Mammary epithelial cell (primary cell): ENCODE measurements at regions of chr4 and their contacts with region 1.

Region 1: GRCh38 chr4:113547487-113548042 is 214.0 kb downstream of the CAMK2D start:
- DNase-seq: peak; percentile 98
- H3K4me3 ChIP-seq: no peak overlapping the region
- H3K27ac ChIP-seq: peak overlapping the region; percentile 34
- H3K4me1 ChIP-seq: no peaks in the 10 kb centered on the region
- H3K27me3 ChIP-seq: no peaks in the 10 kb centered on the region
- CTCF ChIP-seq: peak; percentile 98 to 99

Region 2: DNA sequence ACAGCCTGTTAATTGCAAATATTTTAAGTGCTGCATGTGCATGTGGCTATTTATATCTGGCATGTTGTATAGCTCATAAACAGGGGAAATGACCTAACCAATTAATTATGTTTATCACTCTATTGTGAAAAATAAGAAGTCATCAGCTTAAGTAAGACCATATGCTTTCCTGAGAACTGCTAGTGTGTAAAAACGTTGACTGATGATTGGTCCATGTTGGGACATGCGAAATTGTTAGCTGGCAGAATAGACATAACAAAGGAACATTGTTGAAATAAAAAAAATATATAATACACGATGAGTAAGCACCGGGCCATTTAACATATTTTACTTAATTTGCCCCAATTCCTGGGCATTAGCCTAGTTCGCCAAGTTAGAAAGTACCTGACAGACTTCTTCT is 290.6 kb before region 1 on chr4:
- CTCF ChIA-PET with region 1: no interaction called
- dilution Hi-C with region 1: no loop called
- in situ Hi-C with region 1: no loop called
- intact Hi-C with region 1: no loop called
- DNase-seq: peak; percentile 70
- H3K4me3 ChIP-seq: no peak overlapping the region
- H3K27ac ChIP-seq: no peak overlapping the region
- H3K4me1 ChIP-seq: peaks cover 5% of the 10 kb centered on the region
- H3K27me3 ChIP-seq: no peaks in the 10 kb centered on the region
- CTCF ChIP-seq: no peak

Region 3: GRCh38 chr4:113278324-113278934 is 269.1 kb before region 1 on chr4:
- CTCF ChIA-PET with region 1: no interaction called
- dilution Hi-C with region 1: no loop called
- in situ Hi-C with region 1: loop called in 1 of 2 experiments (anchors 25 kb)
- intact Hi-C with region 1: no loop called
- DNase-seq: peak; percentile 55
- H3K4me3 ChIP-seq: no peak overlapping the region
- H3K27ac ChIP-seq: no peak overlapping the region
- H3K4me1 ChIP-seq: no peaks in the 10 kb centered on the region
- H3K27me3 ChIP-seq: no peaks in the 10 kb centered on the region
- CTCF ChIP-seq: peak; percentile 85 to 88

Region 4: DNA sequence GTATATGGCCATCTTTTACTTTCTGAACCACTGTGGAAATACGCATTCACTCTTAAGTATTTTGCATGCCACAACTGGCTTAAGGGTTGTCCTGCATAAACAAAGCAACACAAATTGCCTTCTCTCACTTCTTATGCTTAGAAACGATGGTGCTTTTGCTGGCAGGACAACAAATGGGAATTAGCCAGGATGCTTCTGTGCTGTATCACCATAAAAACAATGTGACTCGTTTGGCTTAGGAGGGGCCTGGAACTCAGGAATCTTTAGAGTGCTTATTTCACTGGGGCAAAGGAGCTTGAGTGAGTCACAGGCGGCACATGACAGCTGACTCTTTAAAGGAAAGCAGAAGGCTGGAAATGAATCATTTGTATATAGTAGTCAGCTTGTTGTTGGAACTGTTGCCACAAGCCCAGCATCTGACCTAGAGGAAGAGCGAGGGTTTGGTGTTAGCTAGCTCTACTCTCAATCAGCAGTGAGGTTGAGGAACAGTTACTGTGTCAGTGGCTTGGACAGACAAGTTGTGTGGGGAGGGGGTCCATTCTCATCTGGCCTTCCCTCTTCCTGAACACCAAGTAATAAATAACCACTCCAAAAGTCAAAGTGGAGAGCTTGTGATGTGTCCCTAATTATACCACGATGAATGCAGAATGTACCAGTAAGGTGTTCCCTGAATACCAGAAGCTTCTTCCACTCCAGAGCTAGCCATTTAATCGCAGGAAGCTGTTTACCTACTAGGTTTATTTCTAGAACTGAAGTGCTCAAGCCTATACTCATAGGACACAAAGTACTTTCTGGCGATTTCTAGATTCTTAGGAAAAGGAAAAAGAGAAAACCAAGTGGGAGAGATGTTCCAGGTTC is 79.2 kb before region 1 on chr4:
- CTCF ChIA-PET with region 1: no interaction called
- dilution Hi-C with region 1: no loop called
- in situ Hi-C with region 1: no loop called
- intact Hi-C with region 1: loop called (anchors 2 kb)
- DNase-seq: peak; percentile 100
- H3K4me3 ChIP-seq: peak overlapping the region in 2 of 3 experiments; percentile 9 to 26
- H3K27ac ChIP-seq: peak overlapping the region; percentile 99
- H3K4me1 ChIP-seq: peaks cover 26% of the 10 kb centered on the region
- H3K27me3 ChIP-seq: no peaks in the 10 kb centered on the region
- CTCF ChIP-seq: no peak

Region 5: GRCh38 chr4:113684534-113685091 is 137.0 kb after region 1 on chr4:
- CTCF ChIA-PET with region 1: no interaction called
- dilution Hi-C with region 1: no loop called
- in situ Hi-C with region 1: no loop called
- intact Hi-C with region 1: loop called (anchors 1 kb)
- DNase-seq: no peak
- H3K4me3 ChIP-seq: no peak overlapping the region
- H3K27ac ChIP-seq: no peak overlapping the region
- H3K4me1 ChIP-seq: peaks cover 4% of the 10 kb centered on the region
- H3K27me3 ChIP-seq: no peaks in the 10 kb centered on the region
- CTCF ChIP-seq: peak; percentile 4 to 26

Region 6: DNA sequence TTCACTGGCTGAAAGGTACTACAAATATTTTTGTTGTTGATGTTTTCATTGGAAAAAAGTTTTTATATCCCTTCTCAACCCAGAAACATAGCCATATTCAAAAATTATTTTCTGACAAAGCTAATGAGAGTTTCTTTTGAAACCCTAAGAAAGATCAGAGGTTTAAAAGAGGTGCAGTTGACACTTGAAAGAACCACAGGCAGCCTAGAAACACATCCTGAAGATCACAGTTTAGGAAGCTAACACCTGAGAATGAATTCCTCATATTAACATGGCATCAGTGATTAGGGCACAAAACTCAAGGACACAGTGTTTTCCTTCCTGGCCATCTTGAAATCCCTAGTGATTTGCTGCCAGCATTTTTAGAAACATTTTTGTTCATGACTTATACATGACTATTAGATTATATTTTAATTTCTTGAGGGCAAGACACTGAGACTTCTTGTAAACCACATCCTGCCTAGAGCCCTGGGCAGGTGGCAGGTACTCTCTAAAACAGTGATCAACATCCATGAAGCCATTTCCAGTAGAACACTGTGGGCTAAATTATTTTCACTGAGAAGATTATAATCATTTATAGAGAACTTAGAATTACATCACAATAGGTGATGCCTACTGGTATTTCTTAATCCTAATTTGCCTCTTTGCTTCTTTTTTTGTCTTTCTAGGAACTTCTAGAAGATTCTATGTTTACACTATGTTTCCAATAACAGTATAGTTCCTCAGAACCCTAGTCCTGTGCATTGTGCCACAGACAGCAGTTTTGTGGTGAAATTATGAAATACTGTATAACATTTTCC is 351.9 kb after region 1 on chr4:
- CTCF ChIA-PET with region 1: no interaction called
- dilution Hi-C with region 1: no loop called
- in situ Hi-C with region 1: no loop called
- intact Hi-C with region 1: loop called (anchors 10 kb)
- DNase-seq: peak; percentile 45
- H3K4me3 ChIP-seq: no peak overlapping the region
- H3K27ac ChIP-seq: no peak overlapping the region
- H3K4me1 ChIP-seq: peaks cover 9% of the 10 kb centered on the region
- H3K27me3 ChIP-seq: no peaks in the 10 kb centered on the region
- CTCF ChIP-seq: no peak